CD4-positive, alpha-beta memory T cell (primary cell): ENCODE measurements at regions of chr1 and their contacts with region 1.

Region 1: GRCh38 chr1:181424786-181425403 is 58.4 kb upstream of the CACNA1E start:
- DNase-seq: peak; percentile 59 to 76 (median 69)
- H3K4me3 ChIP-seq: no peak overlapping the region
- H3K4me3 Mint-ChIP-seq: peak overlapping the region; percentile 73 to 90 (median 79)
- H3K27ac ChIP-seq: no peak overlapping the region
- H3K27ac Mint-ChIP-seq: peak overlapping the region in 5 of 7 donors; percentile 4 to 88 (median 48)
- H3K4me1 ChIP-seq: peaks cover 17% of the 10 kb centered on the region
- H3K4me1 Mint-ChIP-seq: peaks cover 11 to 19% (median 14%) of the 10 kb centered on the region in 4 donors
- H3K27me3 ChIP-seq: no peaks in the 10 kb centered on the region
- H3K27me3 Mint-ChIP-seq: peaks cover 12 to 16% of the 10 kb centered on the region in 2 donors

Region 2: GRCh38 chr1:181184621-181185020 is 240.3 kb before region 1 on chr1:
- CTCF ChIA-PET with region 1: interaction called, 110 read pairs
- POLR2A ChIA-PET with region 1: interaction called, 3 read pairs
- intact Hi-C with region 1: no loop called
- DNase-seq: no peak
- H3K4me3 ChIP-seq: no peak overlapping the region
- H3K4me3 Mint-ChIP-seq: no peak overlapping the region
- H3K27ac ChIP-seq: no peak overlapping the region
- H3K27ac Mint-ChIP-seq: no peak overlapping the region
- H3K4me1 ChIP-seq: peaks cover 12% of the 10 kb centered on the region
- H3K4me1 Mint-ChIP-seq: peaks cover 8 to 11% (median 10%) of the 10 kb centered on the region in 4 donors
- H3K27me3 ChIP-seq: no peaks in the 10 kb centered on the region
- H3K27me3 Mint-ChIP-seq: peaks cover 5 to 20% of the 10 kb centered on the region in 2 donors

Region 3: GRCh38 chr1:181232532-181232931 is 192.4 kb before region 1 on chr1:
- CTCF ChIA-PET with region 1: interaction called, 3 read pairs
- POLR2A ChIA-PET with region 1: no interaction called
- intact Hi-C with region 1: loop called (anchors 1 kb)
- DNase-seq: no peak
- H3K4me3 ChIP-seq: no peak overlapping the region
- H3K4me3 Mint-ChIP-seq: no peak overlapping the region
- H3K27ac ChIP-seq: no peak overlapping the region
- H3K27ac Mint-ChIP-seq: no peak overlapping the region
- H3K4me1 ChIP-seq: no peaks in the 10 kb centered on the region
- H3K4me1 Mint-ChIP-seq: no peaks in the 10 kb centered on the region
- H3K27me3 ChIP-seq: no peaks in the 10 kb centered on the region
- H3K27me3 Mint-ChIP-seq: peaks cover 5 to 6% of the 10 kb centered on the region in 2 donors

Region 4: GRCh38 chr1:181383702-181384101 is 41.2 kb before region 1 on chr1:
- CTCF ChIA-PET with region 1: interaction called, 5 read pairs
- POLR2A ChIA-PET with region 1: no interaction called
- intact Hi-C with region 1: loop called (anchors 10 kb)
- DNase-seq: no peak
- H3K4me3 ChIP-seq: no peak overlapping the region
- H3K4me3 Mint-ChIP-seq: no peak overlapping the region
- H3K27ac ChIP-seq: no peak overlapping the region
- H3K27ac Mint-ChIP-seq: peak overlapping the region in 2 of 7 donors; percentile 20 to 44
- H3K4me1 ChIP-seq: no peaks in the 10 kb centered on the region
- H3K4me1 Mint-ChIP-seq: no peaks in the 10 kb centered on the region
- H3K27me3 ChIP-seq: no peaks in the 10 kb centered on the region
- H3K27me3 Mint-ChIP-seq: peaks cover 0 to 2% of the 10 kb centered on the region in 2 donors